Activated T-helper 2 cell treated with anti-CD3 and anti-CD28 coated beads, Interferon-gamma antibody, Interleukin-2, Interleukin-4, amounts not matched to agents 10 μg/mL and 5 μg/mL and 100 μg/mL, durations not matched to agents 14 hours and 24 hours and 36 hours (primary cell): ENCODE measurements at regions of chr7 and their contacts with region 1.

Region 1: GRCh38 chr7:26090927-26091519 is 61.0 kb upstream of the NFE2L3 start:
- DNase-seq: no peak
- H3K4me3 Mint-ChIP-seq: peak overlapping the region; percentile 3
- H3K27ac Mint-ChIP-seq: no peak overlapping the region
- H3K4me1 Mint-ChIP-seq: peaks cover 19% of the 10 kb centered on the region
- H3K27me3 Mint-ChIP-seq: peaks cover 2% of the 10 kb centered on the region

Region 2: DNA sequence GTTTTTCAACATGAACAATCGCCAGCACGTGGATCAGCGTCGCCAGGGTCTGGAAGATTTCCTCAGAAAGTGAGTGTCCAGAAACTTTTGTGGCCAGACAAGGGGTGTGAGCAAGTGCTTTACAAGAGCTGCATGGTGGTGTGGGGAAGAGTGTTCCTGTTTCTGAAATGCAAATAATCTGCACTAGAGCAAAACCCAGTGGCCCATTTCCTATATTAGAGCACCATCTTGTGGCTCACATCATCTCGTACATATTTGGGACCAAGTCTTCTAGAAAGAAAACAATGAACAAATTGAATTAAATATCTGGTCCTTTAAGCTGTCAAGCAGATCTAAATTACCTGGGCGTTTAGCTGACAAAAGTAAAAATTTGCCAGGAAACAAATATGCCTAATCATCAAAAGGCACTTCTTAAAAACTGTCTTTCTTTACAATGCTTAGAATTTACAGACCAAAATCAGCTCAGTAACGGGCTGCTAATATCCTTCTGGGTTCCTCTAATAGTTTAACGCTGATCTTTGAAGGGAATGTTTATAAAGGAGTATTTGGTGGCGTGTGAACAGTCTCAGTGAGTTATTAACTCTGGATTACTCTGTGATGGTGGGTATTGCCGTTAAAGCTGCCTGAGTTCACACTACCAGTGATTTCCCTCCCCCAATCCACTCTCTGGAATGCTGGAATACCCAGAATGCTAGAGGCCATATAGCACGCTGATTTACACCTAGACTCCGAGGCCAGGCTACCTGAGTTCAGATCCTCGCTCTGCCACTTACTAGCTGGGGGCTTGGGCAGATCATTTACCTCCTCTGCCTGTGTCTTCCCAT is 274.3 kb after region 1 on chr7:
- intact Hi-C with region 1: loop called (anchors 2 kb)
- DNase-seq: peak; percentile 30
- H3K4me3 Mint-ChIP-seq: no peak overlapping the region
- H3K27ac Mint-ChIP-seq: peak overlapping the region; percentile 63
- H3K4me1 Mint-ChIP-seq: peaks cover 20% of the 10 kb centered on the region
- H3K27me3 Mint-ChIP-seq: no peaks in the 10 kb centered on the region